IMR-90 (cell line): ENCODE measurements at regions of chr1 and their contacts with region 1.

Region 1: GRCh38 chr1:240350910-240351331 is 259.2 kb downstream of the FMN2 start:
- DNase-seq: peak; percentile 96
- ATAC-seq: peak; percentile 87
- H3K4me3 ChIP-seq: no peak overlapping the region
- H3K27ac ChIP-seq: no peak overlapping the region
- H3K4me1 ChIP-seq: peaks cover 17% of the 10 kb centered on the region
- H3K27me3 ChIP-seq: no peaks in the 10 kb centered on the region
- CTCF ChIP-seq: no peak
- POLR2A ChIP-seq: no peak
- RAD21 ChIP-seq: peak; percentile 23; the same call in 1 of the 2 replicates

Region 2: GRCh38 chr1:240234485-240235210 is 116.3 kb before region 1 on chr1:
- CTCF ChIA-PET with region 1: no interaction called
- POLR2A ChIA-PET with region 1: no interaction called
- dilution Hi-C with region 1: no loop called
- in situ Hi-C with region 1: no loop called
- intact Hi-C with region 1: loop called (anchors 5 kb)
- DNase-seq: peak; percentile 83
- ATAC-seq: peak; percentile 42
- H3K4me3 ChIP-seq: no peak overlapping the region
- H3K27ac ChIP-seq: peak overlapping the region; percentile 60
- H3K4me1 ChIP-seq: peaks cover 25% of the 10 kb centered on the region
- H3K27me3 ChIP-seq: no peaks in the 10 kb centered on the region
- CTCF ChIP-seq: no peak
- POLR2A ChIP-seq: no peak
- RAD21 ChIP-seq: no peak